Sciatic nerve (tissue), 2 donors: ENCODE measurements at regions of chr7 and their contacts with region 1.

Region 1: DNA sequence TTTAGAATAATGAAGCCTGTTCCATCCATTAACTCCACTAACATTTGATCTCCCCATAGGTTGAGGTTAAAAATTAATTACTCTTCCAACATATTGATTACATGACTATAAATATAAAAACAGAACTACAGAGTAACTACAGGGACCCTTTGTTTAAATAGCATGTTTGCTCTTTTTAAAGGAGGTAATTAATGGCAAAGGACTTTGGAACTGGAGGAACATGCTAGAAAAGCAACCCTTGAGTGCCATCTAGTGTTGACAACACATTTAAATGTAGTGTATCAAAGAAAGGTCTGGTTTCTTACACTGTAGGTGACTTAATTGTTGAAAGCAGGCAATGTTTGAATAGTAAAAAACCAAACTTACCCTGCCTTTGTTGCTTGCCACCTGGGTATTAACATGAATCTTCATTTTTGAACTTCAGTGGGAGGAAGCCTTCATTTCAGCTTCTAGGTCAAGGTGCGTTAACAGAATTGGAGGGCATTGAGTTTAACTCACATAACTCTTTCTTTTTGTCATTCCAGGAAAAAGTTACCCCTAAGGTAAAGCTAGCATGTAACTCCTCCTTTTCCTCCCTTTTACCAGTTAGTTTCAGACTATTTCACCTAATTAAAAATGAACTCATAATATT is 52.6 kb upstream of the CAPZA2 start:
- DNase-seq: no peak
- ATAC-seq: peak; percentile 78

Region 2: GRCh38 chr7:116258734-116259133 is 551.0 kb before region 1 on chr7:
- intact Hi-C with region 1: loop called (anchors 10 kb)
- DNase-seq: no peak
- ATAC-seq: peak; percentile 68

Region 3: GRCh38 chr7:116588641-116589594 is 220.8 kb before region 1 on chr7:
- intact Hi-C with region 1: loop called (anchors 5 kb)
- DNase-seq: no peak
- ATAC-seq: peak; percentile 73

Region 4: DNA sequence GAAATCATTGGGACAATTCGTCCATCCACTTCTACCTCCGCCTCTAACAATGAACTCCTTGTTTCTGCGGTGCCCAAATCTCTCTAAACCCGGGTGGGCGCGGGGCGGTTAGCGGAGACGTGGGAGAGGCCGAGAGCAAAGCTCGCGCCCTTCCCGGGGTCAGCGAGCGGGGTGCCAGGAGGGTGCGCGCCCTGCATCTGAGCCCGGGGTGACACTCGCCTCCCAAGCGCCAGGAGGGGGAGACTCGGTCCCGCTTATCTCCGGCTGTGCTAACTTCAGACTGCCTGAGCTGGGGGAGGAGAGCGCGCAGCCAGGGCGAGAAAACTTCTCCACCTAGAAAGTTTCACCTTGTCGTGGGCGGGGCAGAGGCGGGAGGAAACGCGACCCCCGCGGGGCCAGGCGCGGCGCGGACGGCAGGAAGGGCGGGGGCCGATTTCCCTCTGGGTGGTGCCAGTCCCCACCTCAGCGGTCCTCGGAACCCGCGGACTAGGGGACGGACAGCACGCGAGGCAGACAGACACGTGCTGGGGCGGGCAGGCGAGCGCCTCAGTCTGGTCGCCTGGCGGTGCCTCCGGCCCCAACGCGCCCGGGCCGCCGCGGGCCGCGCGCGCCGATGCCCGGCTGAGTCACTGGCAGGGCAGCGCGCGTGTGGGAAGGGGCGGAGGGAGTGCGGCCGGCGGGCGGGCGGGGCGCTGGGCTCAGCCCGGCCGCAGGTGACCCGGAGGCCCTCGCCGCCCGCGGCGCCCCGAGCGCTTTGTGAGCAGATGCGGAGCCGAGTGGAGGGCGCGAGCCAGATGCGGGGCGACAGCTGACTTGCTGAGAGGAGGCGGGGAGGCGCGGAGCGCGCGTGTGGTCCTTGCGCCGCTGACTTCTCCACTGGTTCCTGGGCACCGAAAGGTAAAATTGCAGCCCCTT is 137.8 kb before region 1 on chr7 and contains the start of gene MET:
- intact Hi-C with region 1: loop called (anchors 5 kb)
- DNase-seq: peak; percentile 87
- ATAC-seq: peak; percentile 96
- total RNA-seq, gene MET: 60.7 TPM

Region 5: DNA sequence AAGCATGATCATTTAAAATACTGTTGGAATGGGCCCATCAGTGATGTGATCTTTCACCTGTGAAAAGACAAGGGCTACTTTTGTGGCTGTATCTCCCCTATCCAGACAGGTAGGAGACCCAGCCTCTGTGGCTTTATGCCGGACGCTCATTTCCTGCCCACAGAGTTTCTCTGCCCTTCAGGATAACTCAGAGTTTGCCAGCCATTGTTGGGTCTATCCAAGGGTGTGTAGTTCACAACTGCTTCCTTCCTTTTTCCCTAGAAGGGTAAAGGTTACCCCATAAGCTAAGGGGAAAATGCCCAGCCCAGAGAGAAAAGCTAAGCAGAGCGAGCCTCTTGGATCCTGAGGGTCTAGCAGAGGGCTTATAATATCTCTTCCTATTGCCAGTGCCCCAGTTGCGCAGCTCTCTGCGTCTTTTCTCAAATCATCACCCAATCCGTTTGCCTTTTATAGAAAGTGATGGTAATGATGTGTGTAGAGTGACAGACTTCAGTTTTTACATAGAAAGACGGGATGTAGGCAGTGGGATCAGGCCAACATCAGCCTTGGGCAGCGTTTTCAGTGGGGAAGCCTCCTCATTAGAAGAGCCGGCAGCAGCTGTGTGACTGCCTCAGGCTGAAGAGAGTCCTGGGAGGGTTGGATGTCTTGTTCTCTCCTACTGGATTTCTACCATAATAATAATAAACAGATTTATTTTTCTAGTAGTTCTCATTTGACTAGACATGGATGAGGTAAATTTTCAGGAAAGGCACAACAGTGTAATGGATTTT is 57.3 kb before region 1 on chr7:
- intact Hi-C with region 1: no loop called
- DNase-seq: no peak
- ATAC-seq: no peak

Region 6: GRCh38 chr7:116984917-116985316 is 175.2 kb after region 1 on chr7:
- intact Hi-C with region 1: no loop called
- DNase-seq: no peak
- ATAC-seq: peak; percentile 44